Esophagus muscularis mucosa (tissue), 4 donors: ENCODE measurements at regions of chr12 and their contacts with region 1.

Region 1: DNA sequence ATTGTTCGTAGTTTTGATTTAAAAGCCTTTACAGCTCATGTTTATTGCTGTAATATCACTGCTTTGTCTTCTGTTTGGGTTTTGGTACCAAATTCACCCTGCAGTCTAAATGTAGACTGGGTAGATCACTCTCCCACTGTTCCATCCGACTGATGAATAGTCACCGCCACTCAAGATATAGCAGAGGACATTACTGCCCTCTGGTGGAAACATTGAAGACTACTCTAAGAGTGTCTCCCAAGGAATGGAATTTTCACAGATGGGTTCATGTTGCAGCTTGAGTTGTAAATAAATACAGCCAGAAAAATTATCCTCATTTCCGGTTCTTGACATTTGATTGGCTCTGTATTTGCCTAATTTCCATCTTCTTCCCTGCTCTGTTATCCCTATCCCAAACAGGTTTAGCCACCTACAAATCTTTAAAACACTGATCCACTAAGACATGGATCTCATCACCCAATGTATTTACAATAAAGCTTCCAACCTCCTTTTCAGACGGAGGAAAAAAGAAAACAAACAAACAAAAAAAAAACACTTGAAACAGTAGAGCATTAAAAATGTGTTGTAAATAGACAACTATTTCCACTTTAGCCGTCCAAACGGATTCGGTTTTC is 198.3 kb upstream of the CPNE8 start:
- DNase-seq: no peak
- H3K4me3 ChIP-seq: no peak overlapping the region
- H3K27ac ChIP-seq: no peak overlapping the region
- H3K4me1 ChIP-seq: no peaks in the 10 kb centered on the region
- H3K27me3 ChIP-seq: peaks cover 0 to 2% (median 0%) of the 10 kb centered on the region in 4 donors
- CTCF ChIP-seq: peak; percentile 58 to 77 (median 67)
- EP300 ChIP-seq: no peak
- POLR2A ChIP-seq: no peak

Region 2: GRCh38 chr12:38324896-38325295 is 778.8 kb before region 1 on chr12:
- intact Hi-C with region 1: loop called (anchors 5 kb)
- DNase-seq: no peak
- H3K4me3 ChIP-seq: no peak overlapping the region
- H3K27ac ChIP-seq: no peak overlapping the region
- H3K4me1 ChIP-seq: peaks cover 0 to 3% (median 0%) of the 10 kb centered on the region in 4 donors
- H3K27me3 ChIP-seq: no peaks in the 10 kb centered on the region
- CTCF ChIP-seq: no peak
- EP300 ChIP-seq: no peak
- POLR2A ChIP-seq: no peak

Region 3: GRCh38 chr12:38906482-38907170 is 197.0 kb before region 1 on chr12:
- intact Hi-C with region 1: loop called (anchors 10 kb)
- DNase-seq: peak; percentile 94
- H3K4me3 ChIP-seq: peak overlapping the region; percentile 73 to 86 (median 80)
- H3K27ac ChIP-seq: peak overlapping the region; percentile 90 to 98 (median 92)
- H3K4me1 ChIP-seq: peaks cover 4 to 38% (median 27%) of the 10 kb centered on the region in 4 donors
- H3K27me3 ChIP-seq: no peaks in the 10 kb centered on the region
- CTCF ChIP-seq: peak; percentile 78 to 96 (median 85)
- EP300 ChIP-seq: no peak
- POLR2A ChIP-seq: no peak

Region 4: GRCh38 chr12:39287817-39288216 is 184.2 kb after region 1 on chr12:
- intact Hi-C with region 1: no loop called
- DNase-seq: no peak
- H3K4me3 ChIP-seq: no peak overlapping the region
- H3K27ac ChIP-seq: no peak overlapping the region
- H3K4me1 ChIP-seq: no peaks in the 10 kb centered on the region
- H3K27me3 ChIP-seq: no peaks in the 10 kb centered on the region
- CTCF ChIP-seq: no peak
- EP300 ChIP-seq: no peak
- POLR2A ChIP-seq: no peak